ENCODE measurements at regions of chr2 and their contacts with region 1.

Region 1: GRCh38 chr2:137947728-137948336 is 16.4 kb upstream of the HNMT start:
- DNase-seq: no peak

Region 2: DNA sequence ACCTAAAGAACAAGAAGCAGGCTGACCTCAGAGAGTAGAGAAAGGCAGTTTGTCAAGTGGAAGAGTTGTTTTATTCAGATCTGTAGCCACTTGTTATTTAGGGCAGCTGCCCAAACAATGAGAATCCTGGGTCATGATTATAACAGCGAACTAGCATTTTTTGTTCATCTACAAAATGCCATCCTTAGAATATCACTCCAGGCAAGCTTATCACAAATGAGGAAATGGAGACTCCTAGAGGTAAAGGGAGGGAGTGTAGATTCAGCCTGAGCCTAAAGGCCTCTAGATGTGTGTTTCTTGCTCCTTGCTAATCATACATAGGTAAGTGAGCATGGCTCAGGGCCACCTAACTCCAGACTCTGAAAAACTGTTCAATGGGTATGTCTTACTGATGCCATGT is 142.5 kb after region 1 on chr2:
- intact Hi-C with region 1: loop called (anchors 5 kb)
- DNase-seq: no peak

Region 3: GRCh38 chr2:138373993-138374408 is 426.2 kb after region 1 on chr2:
- intact Hi-C with region 1: loop called (anchors 5 kb)
- DNase-seq: no peak

Measured in cardiac septum (tissue), 1 donor.